ENCODE measurements at regions of chr13 and their contacts with region 1.

Region 1: DNA sequence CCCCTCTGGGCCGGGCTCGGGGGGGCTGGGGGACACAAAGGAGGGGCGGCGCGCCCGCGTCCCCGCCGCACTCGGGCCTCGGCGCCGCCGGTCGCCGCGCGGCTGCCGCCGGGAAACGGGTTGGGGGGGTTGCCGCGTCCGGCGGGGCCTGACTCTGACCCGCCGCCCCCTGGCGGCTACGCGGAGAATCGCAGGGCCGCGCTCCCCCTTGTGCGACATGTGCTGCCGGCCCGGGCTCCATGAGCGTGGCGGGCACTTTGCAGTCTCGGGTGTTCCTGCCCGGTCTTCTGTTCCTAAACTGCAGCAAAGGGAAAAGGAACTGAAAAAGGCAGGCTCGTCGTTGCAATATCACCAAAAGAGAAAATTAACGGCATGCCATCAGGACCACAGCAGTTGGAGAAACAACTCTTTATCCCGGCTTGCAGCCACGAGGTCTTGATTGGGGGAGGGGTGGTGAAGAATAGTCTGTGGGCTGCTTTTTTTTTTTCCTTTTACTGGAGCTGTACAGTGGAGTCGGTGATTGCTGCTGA is 1.5 kb downstream of the MIR17HG start:
- DNase-seq: peak; percentile 95
- ATAC-seq: peak; percentile 67
- H3K4me3 Mint-ChIP-seq: peak overlapping the region; percentile 92
- H3K27ac Mint-ChIP-seq: peak overlapping the region; percentile 88
- H3K4me1 Mint-ChIP-seq: peaks cover 56% of the 10 kb centered on the region
- H3K27me3 Mint-ChIP-seq: no peaks in the 10 kb centered on the region
- CTCF ChIP-seq: no peak

Region 2: DNA sequence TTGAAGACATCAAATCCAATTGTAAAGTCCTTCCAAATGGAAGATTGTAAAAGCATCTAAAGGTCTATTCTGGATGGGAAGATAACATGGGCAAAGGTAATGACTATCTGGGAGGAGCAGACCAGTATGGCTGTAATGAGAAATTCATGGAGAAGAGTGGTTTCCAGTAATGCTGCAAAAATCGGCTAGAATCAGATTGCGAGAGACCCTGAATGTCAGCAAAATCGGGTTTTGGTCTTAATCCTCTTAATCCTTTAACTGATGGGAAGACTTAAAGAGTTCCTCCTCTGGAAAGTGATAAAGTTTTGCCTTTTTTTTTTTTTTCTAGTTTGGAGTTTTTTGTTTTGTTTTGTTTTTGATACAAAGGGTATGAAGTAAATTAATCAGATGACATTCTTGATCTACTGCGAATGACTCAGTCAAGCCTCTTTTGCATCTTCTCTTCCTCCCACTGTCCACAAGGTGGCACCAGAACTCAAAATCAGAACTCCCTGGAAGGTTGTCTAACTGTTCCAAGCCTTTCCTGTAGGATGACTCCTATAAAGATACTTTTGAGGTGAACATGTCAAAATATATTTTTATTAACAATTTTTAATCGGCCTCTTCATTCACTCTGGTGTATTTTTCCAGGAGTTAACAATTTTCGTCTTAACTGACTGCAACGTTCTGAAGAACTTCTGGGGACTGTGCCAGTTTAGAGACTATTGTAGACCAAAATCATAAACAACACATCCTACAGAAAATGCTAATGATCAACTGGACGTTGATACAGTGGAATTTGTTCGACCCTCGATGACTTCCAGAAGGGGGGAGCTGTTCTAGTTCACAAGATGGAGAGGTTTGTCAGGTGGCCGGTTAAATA is 214.8 kb before region 1 on chr13:
- CTCF ChIA-PET with region 1: interaction called, 4 read pairs
- POLR2A ChIA-PET with region 1: no interaction called
- intact Hi-C with region 1: loop called (anchors 1 kb)
- DNase-seq: no peak
- ATAC-seq: no peak
- H3K4me3 Mint-ChIP-seq: no peak overlapping the region
- H3K27ac Mint-ChIP-seq: no peak overlapping the region
- H3K4me1 Mint-ChIP-seq: no peaks in the 10 kb centered on the region
- H3K27me3 Mint-ChIP-seq: no peaks in the 10 kb centered on the region
- CTCF ChIP-seq: peak; percentile 54

Region 3: DNA sequence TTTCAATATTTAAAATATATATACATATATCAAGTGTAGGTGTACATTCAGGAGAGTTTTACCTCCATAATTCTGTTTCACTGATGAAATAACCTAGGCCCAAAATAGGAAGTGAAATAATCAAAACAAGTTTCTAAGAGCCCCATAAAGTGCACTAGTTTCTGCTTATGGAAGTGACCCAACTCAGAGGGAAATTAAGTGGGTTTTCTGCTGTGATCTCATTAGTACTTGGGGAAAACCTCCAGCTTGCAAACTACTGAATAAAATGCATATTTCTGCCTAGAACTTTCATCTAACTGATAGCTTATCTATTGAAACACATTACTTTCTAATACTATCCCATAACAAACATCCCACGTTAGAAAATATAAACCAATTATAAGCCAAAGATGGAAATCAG is 46.9 kb before region 1 on chr13:
- CTCF ChIA-PET with region 1: no interaction called
- POLR2A ChIA-PET with region 1: interaction called, 6 read pairs
- intact Hi-C with region 1: loop called (anchors 1 kb)
- DNase-seq: no peak
- ATAC-seq: peak; percentile 71
- H3K4me3 Mint-ChIP-seq: peak overlapping the region; percentile 16
- H3K27ac Mint-ChIP-seq: peak overlapping the region; percentile 64
- H3K4me1 Mint-ChIP-seq: peaks cover 17% of the 10 kb centered on the region
- H3K27me3 Mint-ChIP-seq: no peaks in the 10 kb centered on the region
- CTCF ChIP-seq: no peak

Region 4: GRCh38 chr13:91313103-91313502 is 35.9 kb before region 1 on chr13:
- CTCF ChIA-PET with region 1: interaction called, 7 read pairs
- POLR2A ChIA-PET with region 1: interaction called, 3 read pairs
- intact Hi-C with region 1: loop called (anchors 1 kb)
- DNase-seq: no peak
- ATAC-seq: peak; percentile 58
- H3K4me3 Mint-ChIP-seq: no peak overlapping the region
- H3K27ac Mint-ChIP-seq: no peak overlapping the region
- H3K4me1 Mint-ChIP-seq: peaks cover 5% of the 10 kb centered on the region
- H3K27me3 Mint-ChIP-seq: peaks cover 2% of the 10 kb centered on the region
- CTCF ChIP-seq: no peak

Region 5: GRCh38 chr13:91331047-91331915 is 17.7 kb before region 1 on chr13:
- CTCF ChIA-PET with region 1: no interaction called
- POLR2A ChIA-PET with region 1: interaction called, 5 read pairs
- intact Hi-C with region 1: loop called (anchors 2 kb)
- DNase-seq: no peak
- ATAC-seq: no peak
- H3K4me3 Mint-ChIP-seq: no peak overlapping the region
- H3K27ac Mint-ChIP-seq: no peak overlapping the region
- H3K4me1 Mint-ChIP-seq: peaks cover 10% of the 10 kb centered on the region
- H3K27me3 Mint-ChIP-seq: no peaks in the 10 kb centered on the region
- CTCF ChIP-seq: no peak

Region 6: GRCh38 chr13:91398413-91399272 is 49.7 kb after region 1 on chr13 and contains the start of gene GPC5:
- CTCF ChIA-PET with region 1: no interaction called
- POLR2A ChIA-PET with region 1: no interaction called
- intact Hi-C with region 1: loop called (anchors 1 kb)
- DNase-seq: peak; percentile 74
- ATAC-seq: peak; percentile 99
- H3K4me3 Mint-ChIP-seq: peak within 1 kb of the TSS; percentile 78
- H3K27ac Mint-ChIP-seq: no peak within 1 kb of the TSS
- H3K4me1 Mint-ChIP-seq: peaks cover 23% of the 10 kb centered on the region
- H3K27me3 Mint-ChIP-seq: peaks cover 22% of the 10 kb centered on the region
- CTCF ChIP-seq: no peak
- total RNA-seq, gene GPC5: 0.24 and 0.46 TPM in 2 replicates